A673 (cell line): ENCODE measurements at regions of chr6 and their contacts with region 1.

Region 1: DNA sequence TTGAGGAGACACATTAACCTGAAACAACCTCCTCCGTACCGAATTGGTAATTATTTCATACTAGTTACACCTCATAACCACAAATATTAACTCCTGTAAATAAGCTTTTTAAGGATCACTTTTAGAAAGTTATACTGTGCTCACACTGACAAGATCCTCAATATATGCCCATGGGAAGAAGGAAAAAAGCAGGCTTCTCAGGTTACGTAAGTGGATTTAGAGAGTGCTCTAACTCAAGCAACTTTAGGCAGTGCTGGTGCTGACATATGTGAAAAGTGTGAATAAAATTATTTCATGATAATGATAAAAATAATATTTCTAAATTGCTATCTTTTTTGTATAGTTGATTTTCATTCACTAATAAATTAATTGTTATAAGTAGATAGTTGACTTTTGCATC is 76.1 kb downstream of the PRKN start:
- DNase-seq: no peak
- H3K4me3 ChIP-seq: no peak overlapping the region
- H3K27ac ChIP-seq: no peak overlapping the region
- H3K4me1 ChIP-seq: no peaks in the 10 kb centered on the region
- H3K27me3 ChIP-seq: no peaks in the 10 kb centered on the region
- CTCF ChIP-seq: no peak

Region 2: DNA sequence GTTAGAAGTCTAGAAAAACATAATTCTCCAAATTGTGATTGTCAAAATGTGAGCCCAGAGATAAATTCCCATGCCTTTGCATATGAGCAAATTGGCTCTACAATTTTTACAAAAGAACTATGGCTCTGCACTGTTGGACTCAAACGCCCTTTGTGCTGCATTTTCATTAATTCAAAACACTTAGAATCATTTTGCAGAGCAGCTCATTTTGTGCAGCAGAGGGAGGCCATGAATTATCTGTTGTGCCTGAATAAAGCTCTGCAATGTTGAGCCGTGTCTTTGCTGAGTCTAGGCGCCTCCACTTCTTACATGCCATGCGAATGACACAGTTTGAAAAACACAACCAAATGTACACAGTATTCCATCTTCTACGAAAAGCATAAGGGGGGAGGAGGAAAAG is 154.1 kb before region 1 on chr6:
- CTCF ChIA-PET with region 1: no interaction called
- POLR2A ChIA-PET with region 1: interaction called, 13 read pairs
- intact Hi-C with region 1: no loop called
- DNase-seq: no peak
- H3K4me3 ChIP-seq: no peak overlapping the region
- H3K27ac ChIP-seq: no peak overlapping the region
- H3K4me1 ChIP-seq: no peaks in the 10 kb centered on the region
- H3K27me3 ChIP-seq: no peaks in the 10 kb centered on the region
- CTCF ChIP-seq: no peak